Common myeloid progenitor, CD34-positive (primary cell): ENCODE measurements at regions of chr6 and their contacts with region 1.

Region 1: DNA sequence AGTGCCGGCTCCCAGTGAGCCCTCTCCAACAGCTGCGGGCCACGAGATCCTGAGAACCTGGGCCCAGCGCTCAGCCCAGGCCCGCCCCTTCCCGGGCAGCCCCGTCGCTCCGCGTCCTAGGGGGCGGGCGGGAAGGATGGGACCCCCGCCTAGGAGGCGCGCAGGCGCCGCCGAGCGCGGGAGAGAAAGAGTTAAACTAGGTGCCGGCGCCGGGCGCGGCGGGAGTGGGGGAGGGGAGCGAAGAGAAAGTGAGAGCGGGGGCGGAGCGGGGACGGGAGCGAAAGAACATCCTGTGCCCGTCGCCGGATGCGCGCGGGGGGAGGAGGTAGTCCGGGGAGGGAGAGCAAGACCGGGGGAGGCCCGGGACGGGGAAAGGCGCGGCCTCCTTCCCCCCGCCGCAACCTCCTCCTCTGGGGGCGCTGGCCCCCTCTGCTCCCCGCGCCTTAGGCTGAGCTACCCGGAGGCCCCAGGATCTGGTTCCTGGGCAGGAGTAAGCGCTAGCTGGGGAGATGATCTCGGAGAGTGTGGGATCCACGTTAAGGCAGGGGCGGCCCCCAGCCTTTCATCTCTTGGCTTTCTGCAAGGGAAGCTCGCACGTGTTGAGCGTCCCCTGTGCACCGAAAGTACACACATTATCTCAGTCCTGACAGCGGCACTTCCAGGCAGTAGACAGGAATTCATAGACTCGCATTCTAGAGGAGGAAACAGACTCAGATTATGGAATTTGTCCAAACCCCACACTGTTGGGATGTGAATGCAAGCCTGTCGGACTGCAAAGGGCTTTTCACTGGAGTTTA is 4.9 kb upstream of the ARMC12 start:
- DNase-seq: peak; percentile 84 to 91 (median 90)
- H3K4me3 ChIP-seq: peak overlapping the region; percentile 61 to 81 (median 66)
- H3K27ac ChIP-seq: peak overlapping the region; percentile 72 to 83
- H3K4me1 ChIP-seq: peaks cover 29 to 85% (median 68%) of the 10 kb centered on the region in 4 experiments
- H3K27me3 ChIP-seq: no peaks in the 10 kb centered on the region

Region 2: DNA sequence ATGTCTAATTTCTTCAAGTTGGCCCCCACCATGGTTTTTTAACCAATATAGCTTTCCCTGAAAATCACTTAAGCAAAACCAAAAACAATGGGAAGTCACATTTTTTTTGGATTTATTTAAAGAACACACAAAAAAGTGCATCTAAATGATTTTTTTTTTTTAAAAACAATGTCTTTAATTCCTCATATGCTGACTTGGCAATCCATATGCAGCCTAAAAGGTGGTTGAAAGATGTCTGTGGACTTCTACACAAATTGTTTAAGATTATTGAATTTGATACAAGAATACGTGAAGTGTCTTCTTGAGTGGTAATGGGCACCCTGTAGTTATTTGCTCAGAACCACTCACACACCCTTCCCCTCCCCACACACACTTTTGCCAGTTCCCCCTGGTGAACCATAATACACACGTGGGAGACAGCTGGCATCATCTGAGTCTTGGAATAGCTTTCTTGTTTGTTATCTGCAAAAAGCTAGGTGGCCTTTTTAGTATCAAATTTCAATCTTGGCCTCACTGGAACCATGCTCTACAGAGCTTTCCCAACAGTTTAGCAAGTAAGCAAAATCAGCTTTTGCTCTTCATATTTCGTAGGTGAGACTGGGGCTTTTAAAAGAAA is 158.3 kb before region 1 on chr6:
- CTCF ChIA-PET with region 1: interaction called, 91 read pairs
- POLR2A ChIA-PET with region 1: no interaction called
- DNase-seq: no peak
- H3K4me3 ChIP-seq: no peak overlapping the region
- H3K27ac ChIP-seq: no peak overlapping the region
- H3K4me1 ChIP-seq: no peaks in the 10 kb centered on the region
- H3K27me3 ChIP-seq: no peaks in the 10 kb centered on the region

Region 3: GRCh38 chr6:35596448-35597442 is 135.2 kb before region 1 on chr6:
- CTCF ChIA-PET with region 1: interaction called, 102 read pairs
- POLR2A ChIA-PET with region 1: no interaction called
- DNase-seq: peak in 2 of 3 donors; percentile 51 to 56
- H3K4me3 ChIP-seq: peak overlapping the region in 1 of 7 experiments; percentile 28
- H3K27ac ChIP-seq: peak overlapping the region in 1 of 2 experiments; percentile 37
- H3K4me1 ChIP-seq: peaks cover 16 to 45% (median 25%) of the 10 kb centered on the region in 4 experiments
- H3K27me3 ChIP-seq: no peaks in the 10 kb centered on the region

Region 4: GRCh38 chr6:35663447-35664235 is 68.3 kb before region 1 on chr6:
- CTCF ChIA-PET with region 1: interaction called, 11 read pairs
- POLR2A ChIA-PET with region 1: no interaction called
- DNase-seq: no peak
- H3K4me3 ChIP-seq: no peak overlapping the region
- H3K27ac ChIP-seq: no peak overlapping the region
- H3K4me1 ChIP-seq: peaks cover 3 to 35% (median 29%) of the 10 kb centered on the region in 4 experiments
- H3K27me3 ChIP-seq: no peaks in the 10 kb centered on the region

Region 5: DNA sequence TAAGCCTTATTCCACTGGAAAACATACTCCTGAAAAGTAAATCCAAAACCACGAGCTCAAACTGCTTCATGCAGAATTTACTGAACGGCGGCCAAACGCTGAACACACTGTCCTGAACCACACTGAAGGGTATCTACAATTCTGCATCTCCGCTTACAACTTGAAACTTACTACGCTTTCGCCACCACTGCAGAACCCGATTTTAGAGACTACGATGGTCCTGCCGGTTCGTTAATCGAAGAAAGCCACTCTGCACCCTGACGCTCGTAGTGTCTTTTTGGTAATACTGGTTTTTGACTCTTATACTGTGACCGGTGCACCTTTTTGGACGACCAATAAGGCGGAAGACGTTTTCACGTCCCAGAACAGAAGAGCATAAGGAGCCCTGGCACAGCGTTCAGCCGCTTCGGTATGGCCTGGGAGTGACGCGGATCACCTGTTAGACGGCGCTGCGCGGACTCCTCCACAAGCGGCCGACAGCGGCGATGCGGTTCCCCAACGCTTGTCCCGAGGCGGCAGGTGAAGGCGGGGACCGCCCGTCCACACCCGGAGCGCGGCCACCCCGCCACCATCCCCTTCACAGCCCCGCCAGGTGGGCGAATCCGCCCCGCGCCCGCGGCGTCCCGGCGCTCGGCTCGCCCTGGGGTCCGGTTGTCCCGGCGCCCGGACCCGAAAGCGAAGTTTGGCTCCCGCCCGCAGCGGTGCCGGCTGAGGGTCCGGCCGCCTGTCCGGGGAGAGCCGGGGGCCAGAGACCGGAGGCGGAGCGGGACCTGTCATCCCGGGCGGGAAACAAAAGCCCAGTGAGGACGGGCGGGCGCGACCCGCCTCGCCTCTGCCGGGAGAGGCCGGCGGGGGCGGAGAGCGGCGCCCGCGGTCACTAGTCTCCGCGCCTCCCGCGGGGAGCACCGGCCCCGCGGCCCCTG is 44.0 kb before region 1 on chr6:
- CTCF ChIA-PET with region 1: interaction called, 73 read pairs
- POLR2A ChIA-PET with region 1: interaction called, 8 read pairs
- DNase-seq: peak in 2 of 3 donors; percentile 46 to 56
- H3K4me3 ChIP-seq: peak overlapping the region; percentile 80 to 99 (median 94)
- H3K27ac ChIP-seq: peak overlapping the region in 1 of 2 experiments; percentile 77
- H3K4me1 ChIP-seq: peaks cover 4 to 38% (median 25%) of the 10 kb centered on the region in 4 experiments
- H3K27me3 ChIP-seq: no peaks in the 10 kb centered on the region